Common myeloid progenitor, CD34-positive (primary cell): ENCODE measurements at regions of chr10 and their contacts with region 1.

Region 1: DNA sequence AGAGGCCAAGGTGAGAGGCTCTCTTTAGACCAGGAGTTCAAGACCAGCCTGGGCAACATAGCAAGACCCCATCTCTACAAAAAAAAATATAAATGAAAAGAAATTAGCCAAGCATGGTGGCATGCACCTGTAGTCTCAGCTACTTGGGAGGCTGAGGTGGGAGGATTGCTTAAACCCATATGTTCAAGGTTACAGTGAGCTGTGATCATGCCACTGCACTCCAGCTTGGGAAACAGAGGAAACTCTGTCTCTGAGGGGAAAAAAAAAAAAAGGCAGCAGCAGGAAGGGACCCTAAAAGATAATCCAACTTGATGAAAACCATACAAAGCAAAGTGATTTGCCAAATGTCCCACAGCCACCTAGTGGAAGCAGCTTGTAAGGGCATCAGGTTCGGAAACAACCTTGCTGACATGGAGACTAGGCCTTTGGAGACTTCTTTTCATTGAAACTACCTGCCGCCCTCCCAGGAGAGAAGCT is 15.6 kb upstream of the PBLD start:
- DNase-seq: peak; percentile 54 to 78 (median 75)
- H3K4me3 ChIP-seq: no peak overlapping the region
- H3K27ac ChIP-seq: no peak overlapping the region
- H3K4me1 ChIP-seq: no peaks in the 10 kb centered on the region
- H3K27me3 ChIP-seq: no peaks in the 10 kb centered on the region

Region 2: GRCh38 chr10:68364101-68364886 is 16.0 kb after region 1 on chr10:
- CTCF ChIA-PET with region 1: interaction called, 13 read pairs
- POLR2A ChIA-PET with region 1: no interaction called
- DNase-seq: no peak
- H3K4me3 ChIP-seq: no peak overlapping the region
- H3K27ac ChIP-seq: no peak overlapping the region
- H3K4me1 ChIP-seq: no peaks in the 10 kb centered on the region
- H3K27me3 ChIP-seq: no peaks in the 10 kb centered on the region

Region 3: GRCh38 chr10:68560186-68560942 is 212.1 kb after region 1 on chr10 and contains the start of gene TET1:
- CTCF ChIA-PET with region 1: no interaction called
- POLR2A ChIA-PET with region 1: no interaction called
- DNase-seq: no peak
- H3K4me3 ChIP-seq: peak within 1 kb of the TSS; percentile 8 to 83 (median 67)
- H3K27ac ChIP-seq: peak within 1 kb of the TSS in 1 of 2 experiments; percentile 54
- H3K4me1 ChIP-seq: peaks cover 8 to 33% (median 27%) of the 10 kb centered on the region in 4 experiments
- H3K27me3 ChIP-seq: peaks cover 4 to 74% (median 33%) of the 10 kb centered on the region in 5 experiments